ENCODE measurements at regions of chr12 and their contacts with region 1.

Region 1: GRCh38 chr12:53508534-53509199 is 1.4 kb upstream of the NPFF start:
- DNase-seq: peak; percentile 84
- H3K4me3 ChIP-seq: peak overlapping the region in 1 of 2 experiments; percentile 21; a peak in 1 of 4 replicates
- H3K27ac ChIP-seq: peak overlapping the region in 1 of 2 experiments; percentile 31; a peak in 1 of 4 replicates
- H3K4me1 ChIP-seq: peaks cover 0 to 12% of the 10 kb centered on the region in 2 experiments; a peak in 3 of 4 replicates
- H3K27me3 ChIP-seq: no peaks in the 10 kb centered on the region
- CTCF ChIP-seq: peak; percentile 93
- EP300 ChIP-seq: no peak
- RAD21 ChIP-seq: peak; percentile 97

Region 2: DNA sequence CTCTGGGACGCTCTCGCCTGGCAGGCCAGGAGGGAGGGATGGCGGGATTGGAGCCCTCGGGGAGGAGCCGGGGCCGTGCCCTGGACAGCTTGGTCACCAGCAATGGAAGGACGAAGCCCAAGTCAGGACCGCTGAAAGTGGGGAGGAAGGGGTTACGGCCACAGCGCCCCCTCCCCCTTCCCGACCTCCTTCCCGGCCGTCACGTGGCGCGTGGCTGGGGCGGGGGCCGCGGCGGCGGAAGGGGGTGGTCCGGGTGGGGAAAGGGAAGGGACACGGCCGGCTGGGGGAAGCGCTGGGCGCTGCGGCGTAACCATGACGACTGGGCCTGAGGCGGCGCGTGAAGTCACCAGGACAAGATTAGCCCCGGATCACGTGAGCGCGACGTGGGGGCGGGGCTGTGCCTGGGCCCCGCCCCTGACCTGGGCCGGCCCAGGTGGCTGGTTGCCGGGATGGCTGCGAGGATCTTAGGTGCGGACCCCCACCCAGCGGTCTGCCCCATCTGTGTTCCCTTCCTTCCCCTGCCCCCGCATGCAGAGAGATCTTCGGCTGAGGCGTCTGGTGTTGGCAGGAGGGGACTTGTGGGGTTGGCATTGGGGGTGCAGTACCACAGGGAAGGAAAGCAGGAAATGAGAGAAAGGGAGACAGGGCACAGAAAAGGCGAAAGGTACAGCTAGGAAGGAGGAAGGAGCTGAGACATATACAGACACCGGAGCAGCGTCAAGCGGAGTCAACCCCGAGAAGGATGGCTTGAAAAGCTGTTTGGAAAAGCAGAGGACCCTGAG is 15.6 kb before region 1 on chr12:
- CTCF ChIA-PET with region 1: interaction called, 18 read pairs
- POLR2A ChIA-PET with region 1: no interaction called
- DNase-seq: peak; percentile 97
- H3K4me3 ChIP-seq: peak overlapping the region; percentile 47 to 57
- H3K27ac ChIP-seq: peak overlapping the region; percentile 63 to 94
- H3K4me1 ChIP-seq: peaks cover 24 to 36% of the 10 kb centered on the region in 2 experiments
- H3K27me3 ChIP-seq: no peaks in the 10 kb centered on the region
- CTCF ChIP-seq: no peak; the same call in 1 of the 2 replicates
- EP300 ChIP-seq: peak in 1 of 2 experiments; percentile 50; a peak in 2 of 4 replicates
- RAD21 ChIP-seq: no peak

Measured in SK-N-SH (cell line).